ENCODE measurements at regions of chr17 and their contacts with region 1.

Region 1: DNA sequence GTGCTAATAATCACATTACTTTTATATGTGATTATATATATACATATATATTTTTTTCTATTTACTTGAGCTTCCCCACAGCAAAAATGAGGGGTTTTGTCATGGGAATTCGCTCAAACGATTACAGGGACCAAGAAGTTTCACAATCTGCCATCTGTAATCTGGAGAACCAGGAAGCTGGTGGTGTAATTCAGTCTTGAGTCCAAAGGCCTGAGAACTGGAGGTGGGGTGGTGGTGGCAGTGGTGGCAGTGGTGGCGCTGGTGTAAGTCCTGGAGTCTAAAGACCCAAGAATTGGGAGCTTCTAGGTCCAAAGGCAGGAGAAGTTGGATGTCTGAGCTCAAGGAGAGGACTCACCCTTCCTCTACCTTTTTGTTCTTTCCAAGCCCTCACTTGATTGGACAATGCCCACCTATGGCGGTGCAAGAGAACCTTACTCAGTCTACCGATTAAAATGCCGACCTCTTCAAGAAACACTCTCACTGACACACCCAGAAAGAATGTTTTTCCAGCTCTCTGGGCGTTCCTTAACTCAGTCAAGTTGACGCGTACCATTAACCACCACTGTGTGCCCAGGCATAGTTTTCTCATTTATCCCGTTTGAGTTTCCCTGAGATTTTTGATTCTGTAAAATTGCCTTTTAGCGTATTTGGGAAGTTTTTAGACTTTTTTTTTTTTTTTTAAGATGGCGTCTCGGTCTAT is 31.9 kb downstream of the POLR2A start:
- DNase-seq: no peak
- ATAC-seq: no peak
- H3K4me3 Mint-ChIP-seq: no peak overlapping the region
- H3K27ac Mint-ChIP-seq: peak overlapping the region; percentile 35
- H3K4me1 Mint-ChIP-seq: no peaks in the 10 kb centered on the region
- H3K27me3 Mint-ChIP-seq: no peaks in the 10 kb centered on the region
- CTCF ChIP-seq: no peak

Region 2: DNA sequence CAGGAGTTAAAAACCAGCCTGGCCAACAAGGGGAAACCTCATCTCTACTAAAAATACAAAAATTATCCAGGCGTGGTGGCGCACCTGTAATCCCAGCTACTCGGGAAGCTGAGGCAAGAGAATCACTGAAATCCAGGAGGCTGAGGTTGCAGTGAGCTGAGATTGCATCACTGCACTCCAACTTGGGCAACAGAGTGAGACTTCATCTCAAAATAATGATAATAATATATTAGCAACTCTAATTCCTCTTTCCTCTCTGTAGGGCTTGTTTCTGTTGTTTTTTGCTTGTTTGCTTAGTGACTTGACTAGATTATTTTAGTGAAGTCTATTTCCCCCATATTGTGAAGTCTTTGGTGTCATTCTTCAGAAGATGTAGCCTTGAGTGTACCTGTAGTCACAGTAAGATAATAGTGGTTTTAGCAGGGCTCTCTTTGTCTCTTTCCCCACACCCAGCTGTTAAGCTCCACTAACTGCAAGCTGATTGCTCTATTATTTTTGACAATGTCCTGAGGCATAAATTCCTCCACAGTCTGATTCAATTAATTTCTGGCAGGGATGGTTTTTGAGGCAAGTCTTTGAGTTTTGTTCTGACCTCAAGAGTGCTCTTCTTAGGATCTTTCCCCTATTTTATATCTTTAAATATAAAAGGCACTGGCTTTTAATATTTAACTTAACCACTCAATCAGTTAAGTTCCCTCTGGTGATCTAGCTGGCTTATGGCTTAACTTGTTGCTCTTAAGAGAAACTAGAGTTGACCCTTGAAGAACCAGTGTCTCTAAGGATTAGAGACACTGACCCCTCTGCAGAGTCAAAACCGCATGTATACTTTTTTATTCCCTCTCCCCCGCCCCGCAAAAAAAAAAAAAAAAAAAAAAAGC is 14.2 kb after region 1 on chr17:
- CTCF ChIA-PET with region 1: interaction called, 12 read pairs
- POLR2A ChIA-PET with region 1: no interaction called
- intact Hi-C with region 1: no loop called
- DNase-seq: no peak
- ATAC-seq: no peak
- H3K4me3 Mint-ChIP-seq: no peak overlapping the region
- H3K27ac Mint-ChIP-seq: no peak overlapping the region
- H3K4me1 Mint-ChIP-seq: no peaks in the 10 kb centered on the region
- H3K27me3 Mint-ChIP-seq: no peaks in the 10 kb centered on the region
- CTCF ChIP-seq: no peak

Region 3: GRCh38 chr17:7548585-7549400 is 32.7 kb after region 1 on chr17 and contains the start of gene TNFSF12:
- CTCF ChIA-PET with region 1: interaction called, 15 read pairs
- POLR2A ChIA-PET with region 1: interaction called, 8 read pairs
- intact Hi-C with region 1: no loop called
- DNase-seq: peak; percentile 55
- ATAC-seq: peak; percentile 58
- H3K4me3 Mint-ChIP-seq: peak within 1 kb of the TSS; percentile 82
- H3K27ac Mint-ChIP-seq: peak within 1 kb of the TSS; percentile 90
- H3K4me1 Mint-ChIP-seq: peaks cover 52% of the 10 kb centered on the region
- H3K27me3 Mint-ChIP-seq: no peaks in the 10 kb centered on the region
- CTCF ChIP-seq: no peak
- total RNA-seq, gene TNFSF12: 25.2 and 30.7 TPM in 2 replicates

Region 4: DNA sequence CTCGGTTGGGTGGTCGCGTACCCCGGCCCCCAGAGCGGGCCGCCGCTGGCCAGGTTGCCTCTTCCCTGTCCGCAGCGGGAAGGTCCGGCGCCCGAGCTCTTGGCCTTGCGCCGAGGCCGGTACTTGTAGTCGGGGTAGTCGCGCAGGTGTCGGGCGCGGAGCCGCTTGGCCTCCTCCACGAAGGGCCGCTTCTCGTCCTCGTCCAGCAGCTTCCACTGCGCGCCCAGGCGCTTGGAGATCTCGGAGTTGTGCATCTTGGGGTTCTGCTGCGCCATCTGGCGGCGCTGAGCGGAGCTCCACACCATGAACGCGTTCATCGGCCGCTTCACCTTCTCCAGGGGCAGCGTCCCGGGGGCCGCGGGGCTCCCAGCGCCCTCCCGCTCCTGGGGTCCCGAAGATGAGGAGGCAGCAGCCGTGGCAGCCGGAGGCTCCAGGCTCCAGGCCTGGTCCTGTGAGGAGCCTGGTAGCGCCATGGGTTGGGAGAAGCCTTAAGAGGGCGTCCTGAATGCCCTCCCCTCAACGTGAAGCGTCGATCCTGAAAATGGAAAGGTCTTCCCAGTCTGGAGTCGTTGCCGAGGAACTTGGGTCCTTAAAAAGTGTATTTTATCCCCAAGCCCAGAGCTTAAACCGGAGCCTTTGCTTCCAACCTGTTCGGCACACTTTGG is 73.3 kb after region 1 on chr17:
- CTCF ChIA-PET with region 1: interaction called, 38 read pairs
- POLR2A ChIA-PET with region 1: interaction called, 11 read pairs
- intact Hi-C with region 1: loop called (anchors 1 kb)
- DNase-seq: peak; percentile 66
- ATAC-seq: peak; percentile 89
- H3K4me3 Mint-ChIP-seq: no peak overlapping the region
- H3K27ac Mint-ChIP-seq: no peak overlapping the region
- H3K4me1 Mint-ChIP-seq: peaks cover 13% of the 10 kb centered on the region
- H3K27me3 Mint-ChIP-seq: no peaks in the 10 kb centered on the region
- CTCF ChIP-seq: peak; percentile 44

Measured in activated B cell treated with CpG ODN at 0.5 μM for 24 hours (primary cell).